Right lobe of liver (tissue), 6 donors: ENCODE measurements at regions of chr17 and their contacts with region 1.

Region 1: GRCh38 chr17:72725433-72726068 is 366.9 kb downstream of the SLC39A11 start:
- DNase-seq: peak; percentile 59 to 69 (median 67)
- ATAC-seq: peak; percentile 85 to 93 (median 90)
- H3K4me3 ChIP-seq: no peak overlapping the region
- H3K27ac ChIP-seq: no peak overlapping the region
- H3K4me1 ChIP-seq: no peaks in the 10 kb centered on the region
- H3K27me3 ChIP-seq: no peaks in the 10 kb centered on the region
- CTCF ChIP-seq: peak; percentile 70 to 87 (median 86)
- POLR2A ChIP-seq: no peak

Region 2: DNA sequence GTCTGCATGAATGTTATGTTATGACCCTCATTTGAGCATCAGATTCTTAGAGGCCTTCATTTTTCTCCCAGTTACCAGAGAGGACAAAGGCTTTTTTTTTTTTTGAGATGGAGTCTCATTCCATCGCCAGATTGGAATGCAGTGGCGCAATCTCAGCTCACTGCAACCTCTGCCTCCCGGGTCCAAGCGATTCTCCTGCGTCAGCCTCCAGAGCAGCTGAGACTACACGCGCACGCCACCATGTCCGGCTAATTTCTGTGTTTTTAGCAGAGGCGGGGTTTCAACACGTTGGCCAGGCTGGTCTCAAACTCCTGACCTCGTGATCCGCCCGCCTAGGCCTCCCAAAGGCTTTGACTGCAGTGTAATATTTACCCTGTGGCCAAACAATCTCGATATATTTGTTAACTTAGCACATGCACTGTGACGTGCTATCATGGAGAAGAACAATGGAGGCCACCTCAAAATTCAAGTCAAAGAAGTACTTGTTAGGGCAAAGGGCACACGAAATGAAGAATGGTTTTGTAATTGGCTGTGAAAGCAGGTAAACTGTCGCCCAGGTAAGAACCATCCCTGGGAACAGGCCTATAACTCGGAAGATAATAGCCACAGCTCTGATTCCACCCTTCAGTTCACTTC is 63.5 kb after region 1 on chr17:
- intact Hi-C with region 1: no loop called
- DNase-seq: no peak
- ATAC-seq: no peak
- H3K4me3 ChIP-seq: no peak overlapping the region
- H3K27ac ChIP-seq: no peak overlapping the region
- H3K4me1 ChIP-seq: no peaks in the 10 kb centered on the region
- H3K27me3 ChIP-seq: no peaks in the 10 kb centered on the region
- CTCF ChIP-seq: no peak
- POLR2A ChIP-seq: no peak

Region 3: DNA sequence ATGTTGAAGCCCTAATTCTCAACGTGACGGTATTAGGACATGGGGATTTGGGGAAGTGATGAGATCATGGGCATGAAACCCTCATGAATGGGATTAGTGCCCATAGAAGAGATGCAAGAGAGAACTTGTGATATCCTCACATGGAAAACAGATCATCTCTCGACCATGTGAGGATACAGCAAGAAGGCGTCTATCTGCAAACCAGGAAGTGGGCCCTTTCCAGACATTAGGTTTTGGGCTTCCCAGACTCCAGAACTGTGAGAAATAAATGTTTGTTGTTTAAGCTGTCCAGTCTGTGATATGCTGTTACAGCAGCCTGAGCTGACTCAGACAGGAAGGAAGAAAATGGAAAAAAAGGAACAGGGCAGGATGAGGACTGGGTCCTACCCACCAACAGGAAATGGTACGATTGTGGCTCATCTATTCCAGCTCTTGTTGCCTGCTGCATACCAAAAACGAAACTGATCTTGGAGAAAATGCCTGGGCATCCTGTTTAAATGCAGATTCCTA is 417.4 kb after region 1 on chr17:
- intact Hi-C with region 1: no loop called
- DNase-seq: no peak
- ATAC-seq: peak in 3 of 4 donors; percentile 45 to 72 (median 50)
- H3K4me3 ChIP-seq: no peak overlapping the region
- H3K27ac ChIP-seq: no peak overlapping the region
- H3K4me1 ChIP-seq: no peaks in the 10 kb centered on the region
- H3K27me3 ChIP-seq: no peaks in the 10 kb centered on the region
- CTCF ChIP-seq: no peak
- POLR2A ChIP-seq: no peak

Region 4: GRCh38 chr17:73189417-73190099 is 464.0 kb after region 1 on chr17:
- intact Hi-C with region 1: loop called in 1 of 2 experiments (anchors 10 kb)
- DNase-seq: no peak
- ATAC-seq: peak in 2 of 4 donors; percentile 42 to 57
- H3K4me3 ChIP-seq: no peak overlapping the region
- H3K27ac ChIP-seq: no peak overlapping the region
- H3K4me1 ChIP-seq: peaks cover 0 to 6% (median 2%) of the 10 kb centered on the region in 4 donors
- H3K27me3 ChIP-seq: no peaks in the 10 kb centered on the region
- CTCF ChIP-seq: peak; percentile 24 to 72 (median 56)
- POLR2A ChIP-seq: no peak